HepG2 (cell line): ENCODE measurements at regions of chr16 and their contacts with region 1.

Region 1: GRCh38 chr16:53022374-53022773 is 30.3 kb downstream of the CHD9NB start:
- DNase-seq: peak; percentile 63
- ATAC-seq: peak; percentile 97
- H3K4me3 ChIP-seq: no peak overlapping the region
- H3K27ac ChIP-seq: no peak overlapping the region
- H3K4me1 ChIP-seq: no peaks in the 10 kb centered on the region
- H3K27me3 ChIP-seq: peaks cover 0 to 7% of the 10 kb centered on the region in 2 experiments; a peak in 1 of 5 replicates
- CTCF ChIP-seq: peak; percentile 88
- EP300 ChIP-seq: no peak
- POLR2A ChIP-seq: no peak
- RAD21 ChIP-seq: peak; percentile 80

Region 2: DNA sequence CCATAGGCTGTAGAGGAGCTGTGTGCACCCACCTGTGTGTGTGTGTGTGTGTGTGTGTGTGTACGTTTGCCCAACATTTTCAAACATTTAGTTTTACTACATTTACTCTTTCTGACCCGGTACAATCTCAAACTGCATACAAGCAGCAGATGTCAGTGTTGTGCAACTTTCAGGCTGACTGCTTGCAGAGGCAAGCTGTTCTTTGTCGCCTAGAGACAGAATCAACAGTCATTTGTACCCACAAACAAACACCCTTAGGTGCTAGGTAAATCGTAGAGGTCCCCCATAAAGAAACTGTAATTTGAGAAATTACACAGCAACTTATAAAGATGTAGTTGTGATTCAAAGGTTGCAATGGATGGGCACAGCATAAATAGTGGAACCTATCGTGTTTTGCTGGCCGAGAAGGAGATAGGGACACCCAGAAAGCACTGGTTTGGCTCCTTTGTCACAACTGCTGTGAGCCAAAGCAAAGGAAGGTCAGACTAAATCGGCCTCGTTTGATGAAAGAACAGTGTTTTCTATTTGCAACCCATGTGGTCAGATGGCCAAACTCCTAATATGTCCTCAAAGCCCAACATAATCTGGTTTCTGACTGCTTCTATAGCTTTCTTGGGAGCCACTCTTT is 953.8 kb before region 1 on chr16:
- CTCF ChIA-PET with region 1: interaction called, 32 read pairs
- POLR2A ChIA-PET with region 1: no interaction called
- in situ Hi-C with region 1: loop called (anchors 5 kb)
- intact Hi-C with region 1: no loop called
- DNase-seq: peak; percentile 35
- ATAC-seq: peak; percentile 72
- H3K4me3 ChIP-seq: no peak overlapping the region
- H3K27ac ChIP-seq: no peak overlapping the region
- H3K4me1 ChIP-seq: no peaks in the 10 kb centered on the region
- H3K27me3 ChIP-seq: no peaks in the 10 kb centered on the region
- CTCF ChIP-seq: peak; percentile 80
- EP300 ChIP-seq: no peak
- POLR2A ChIP-seq: no peak
- RAD21 ChIP-seq: peak; percentile 55; the same call in 1 of the 2 replicates

Region 3: DNA sequence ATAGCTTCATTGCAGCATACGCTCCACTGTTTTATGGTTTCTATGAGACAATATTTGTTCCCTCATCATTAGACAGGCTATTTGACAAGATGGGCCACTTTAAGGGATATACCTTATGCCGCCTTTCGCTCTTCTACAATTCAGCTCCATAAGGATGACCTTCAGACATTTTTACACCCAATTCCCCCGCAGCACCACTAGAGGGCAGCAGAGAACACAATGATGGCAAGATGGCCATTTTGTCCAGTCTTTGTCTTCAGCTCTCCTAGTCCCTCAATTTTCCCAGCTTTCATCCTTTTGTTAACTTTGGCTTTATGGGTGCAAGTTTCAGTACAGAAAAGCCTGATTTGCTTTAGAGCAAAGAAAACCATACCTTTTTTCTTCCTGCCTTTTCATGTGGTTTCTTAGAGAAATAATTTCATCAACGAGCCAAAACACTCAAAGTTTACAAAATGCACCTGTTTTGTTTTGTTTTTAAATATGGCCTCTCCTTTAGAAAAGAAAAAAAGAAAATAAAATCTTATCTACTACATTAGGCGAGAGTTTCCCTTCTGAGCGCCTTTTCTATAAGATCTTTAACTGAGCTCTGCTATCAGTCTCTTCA is 830.7 kb before region 1 on chr16:
- CTCF ChIA-PET with region 1: no interaction called
- POLR2A ChIA-PET with region 1: no interaction called
- in situ Hi-C with region 1: no loop called
- intact Hi-C with region 1: loop called (anchors 1 kb)
- DNase-seq: peak; percentile 76
- ATAC-seq: peak; percentile 74
- H3K4me3 ChIP-seq: no peak overlapping the region
- H3K27ac ChIP-seq: no peak overlapping the region
- H3K4me1 ChIP-seq: peaks cover 9% of the 10 kb centered on the region
- H3K27me3 ChIP-seq: no peaks in the 10 kb centered on the region
- CTCF ChIP-seq: peak; percentile 97
- EP300 ChIP-seq: no peak
- POLR2A ChIP-seq: no peak
- RAD21 ChIP-seq: peak; percentile 90

Region 4: GRCh38 chr16:52976539-52977167 is 45.7 kb before region 1 on chr16:
- CTCF ChIA-PET with region 1: interaction called, 8 read pairs
- POLR2A ChIA-PET with region 1: no interaction called
- in situ Hi-C with region 1: no loop called
- intact Hi-C with region 1: loop called (anchors 2 kb)
- DNase-seq: peak; percentile 41
- ATAC-seq: peak; percentile 95
- H3K4me3 ChIP-seq: no peak overlapping the region
- H3K27ac ChIP-seq: no peak overlapping the region
- H3K4me1 ChIP-seq: no peaks in the 10 kb centered on the region
- H3K27me3 ChIP-seq: peaks cover 0 to 2% of the 10 kb centered on the region in 2 experiments; a peak in 1 of 5 replicates
- CTCF ChIP-seq: peak; percentile 69
- EP300 ChIP-seq: no peak
- POLR2A ChIP-seq: no peak
- RAD21 ChIP-seq: no peak